PC-9 (cell line): ENCODE measurements at regions of chr1 and their contacts with region 1.

Region 1: GRCh38 chr1:109099938-109100773 is 9.6 kb downstream of the TMEM167B start:
- DNase-seq: peak; percentile 95 to 97
- H3K4me3 ChIP-seq: peak overlapping the region; percentile 99
- H3K27ac ChIP-seq: peak overlapping the region; percentile 84
- H3K4me1 ChIP-seq: peaks cover 35% of the 10 kb centered on the region
- H3K27me3 ChIP-seq: no peaks in the 10 kb centered on the region
- CTCF ChIP-seq: peak; percentile 93

Region 2: DNA sequence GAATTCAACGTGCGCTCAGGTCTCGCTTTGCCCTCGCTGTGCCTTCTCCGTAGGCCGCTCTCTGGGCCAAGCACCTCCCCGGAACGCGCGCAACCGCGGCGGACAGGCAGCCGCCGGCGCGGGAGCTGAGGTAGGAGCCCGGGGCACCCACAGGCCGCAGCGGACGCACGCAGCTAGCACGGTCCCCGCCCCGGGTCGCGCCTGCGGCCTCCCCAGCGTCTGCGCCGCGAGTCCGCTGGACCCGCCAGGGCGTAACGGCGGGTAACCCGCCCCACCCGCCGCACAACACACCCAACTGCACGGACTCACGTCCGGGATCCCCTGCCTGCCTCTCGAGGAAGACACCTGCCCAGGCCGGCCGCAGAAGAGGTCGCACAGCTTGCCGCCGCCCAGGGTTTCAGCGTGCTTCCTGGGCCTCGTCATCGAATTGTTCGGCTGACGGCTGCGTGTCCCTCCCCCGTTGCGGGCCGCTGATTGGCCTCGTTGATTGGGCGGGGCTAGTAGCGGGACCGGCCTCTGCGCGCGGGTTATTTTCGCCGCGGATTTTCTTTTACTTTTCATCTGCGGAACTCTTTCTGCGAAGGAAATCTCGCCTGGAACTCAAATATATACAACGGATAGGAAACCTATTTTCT is 137.0 kb before region 1 on chr1 and contains the start of gene CLCC1:
- CTCF ChIA-PET with region 1: no interaction called
- POLR2A ChIA-PET with region 1: no interaction called
- intact Hi-C with region 1: loop called (anchors 1 kb)
- DNase-seq: peak; percentile 91 to 92
- H3K4me3 ChIP-seq: peak within 1 kb of the TSS; percentile 79
- H3K27ac ChIP-seq: peak within 1 kb of the TSS; percentile 87
- H3K4me1 ChIP-seq: peaks cover 16% of the 10 kb centered on the region
- H3K27me3 ChIP-seq: no peaks in the 10 kb centered on the region
- CTCF ChIP-seq: no peak
- total RNA-seq, gene CLCC1: 23.7 and 30.1 TPM in 2 replicates

Region 3: GRCh38 chr1:109041621-109042468 is 58.3 kb before region 1 on chr1 and contains the start of gene WDR47:
- CTCF ChIA-PET with region 1: interaction called, 3 read pairs
- POLR2A ChIA-PET with region 1: interaction called, 12 read pairs
- intact Hi-C with region 1: no loop called
- DNase-seq: peak; percentile 93 to 94
- H3K4me3 ChIP-seq: peak within 1 kb of the TSS; percentile 76
- H3K27ac ChIP-seq: no peak within 1 kb of the TSS
- H3K4me1 ChIP-seq: peaks cover 16% of the 10 kb centered on the region
- H3K27me3 ChIP-seq: no peaks in the 10 kb centered on the region
- CTCF ChIP-seq: no peak
- total RNA-seq, gene WDR47: 6.4 and 8.3 TPM in 2 replicates

Region 4: DNA sequence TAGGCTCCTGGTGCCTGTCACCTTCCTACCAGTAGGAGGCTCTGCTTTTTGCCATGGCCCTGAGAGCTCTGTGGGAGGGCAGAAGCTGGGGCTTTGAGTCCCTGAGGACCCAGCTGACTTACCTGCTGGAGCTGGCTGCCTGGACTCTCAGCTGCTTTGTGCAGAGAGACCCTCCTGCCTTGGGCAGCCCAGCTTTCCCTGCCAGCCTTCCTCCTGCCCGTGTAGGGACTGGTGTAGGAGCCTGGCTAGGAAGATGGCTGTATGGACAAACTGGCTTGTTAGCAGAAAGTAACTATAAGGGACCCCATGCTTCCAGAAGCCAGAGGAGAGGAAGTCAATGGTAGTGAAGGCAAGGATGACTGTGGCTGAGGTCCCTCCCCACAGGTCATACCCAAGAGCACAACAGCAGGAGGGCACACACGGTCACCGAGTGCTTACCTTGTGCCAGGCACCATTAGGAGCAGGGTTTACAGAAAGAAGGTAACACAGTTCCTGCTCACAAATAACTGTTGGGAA is 139.5 kb after region 1 on chr1:
- CTCF ChIA-PET with region 1: interaction called, 12 read pairs
- POLR2A ChIA-PET with region 1: no interaction called
- intact Hi-C with region 1: no loop called
- DNase-seq: peak; percentile 36 to 66
- H3K4me3 ChIP-seq: no peak overlapping the region
- H3K27ac ChIP-seq: peak overlapping the region; percentile 92
- H3K4me1 ChIP-seq: peaks cover 38% of the 10 kb centered on the region
- H3K27me3 ChIP-seq: no peaks in the 10 kb centered on the region
- CTCF ChIP-seq: peak; percentile 80